CD14-positive monocyte (primary cell): ENCODE measurements at regions of chr11 and their contacts with region 1.

Region 1: DNA sequence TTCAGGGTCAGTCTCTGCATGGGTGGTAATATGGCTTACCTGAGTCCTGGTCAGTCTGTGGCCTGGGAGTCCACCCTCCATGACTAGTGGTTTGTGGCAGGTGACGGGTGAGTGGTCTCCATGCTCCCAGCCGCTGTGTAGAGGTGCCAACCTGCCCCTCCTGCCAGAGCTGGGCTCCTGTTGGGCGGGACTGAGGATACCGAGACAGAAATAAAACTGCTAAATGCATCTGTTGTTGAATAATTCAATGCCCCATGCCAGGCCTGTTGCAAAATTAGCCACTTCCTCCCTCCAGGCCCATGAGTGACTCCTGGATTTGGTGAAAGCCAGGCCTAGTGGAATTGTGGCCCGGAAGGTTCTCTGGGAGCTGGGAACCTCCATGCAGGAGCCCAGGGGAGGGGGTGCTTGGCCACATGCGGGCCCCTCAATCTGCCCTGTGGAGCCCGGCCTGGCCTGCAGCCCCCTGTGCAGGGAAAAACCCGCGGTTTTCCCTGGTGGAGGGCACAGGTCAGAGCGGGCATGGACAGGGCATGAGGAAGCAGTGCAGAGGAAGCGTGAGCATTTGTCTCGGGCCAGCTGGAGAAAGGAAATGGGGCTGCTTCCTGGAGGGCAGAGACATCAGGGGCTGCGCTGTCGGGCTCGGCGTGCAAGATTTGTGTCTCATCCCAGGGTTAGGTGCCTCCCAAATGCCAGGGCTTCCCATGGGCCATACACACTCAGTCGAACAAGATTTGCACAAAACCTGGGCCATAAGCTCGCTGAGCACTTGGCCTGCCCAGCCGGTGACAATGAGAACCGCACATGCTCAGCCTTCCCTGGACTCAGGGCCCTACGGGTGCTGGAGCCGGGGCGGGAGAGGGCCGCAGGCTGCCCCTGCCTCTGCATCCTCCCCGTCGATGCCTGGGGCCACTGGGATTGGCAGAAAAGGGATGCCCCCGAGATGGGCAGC is 66.9 kb downstream of the KCNQ1 start:
- DNase-seq: peak; percentile 45 to 62 (median 55)
- H3K4me3 ChIP-seq: peak overlapping the region in 1 of 3 experiments; percentile 54
- H3K4me3 Mint-ChIP-seq: peak overlapping the region; percentile 49 to 73
- H3K27ac ChIP-seq: peak overlapping the region; percentile 70 to 81
- H3K27ac Mint-ChIP-seq: peak overlapping the region; percentile 75 to 93 (median 91)
- H3K4me1 ChIP-seq: peaks cover 36 to 46% of the 10 kb centered on the region in 2 donors
- H3K4me1 Mint-ChIP-seq: peaks cover 49% of the 10 kb centered on the region
- H3K27me3 ChIP-seq: no peaks in the 10 kb centered on the region
- H3K27me3 Mint-ChIP-seq: peaks cover 0 to 8% (median 1%) of the 10 kb centered on the region in 3 donors
- CTCF ChIP-seq: no peak

Region 2: DNA sequence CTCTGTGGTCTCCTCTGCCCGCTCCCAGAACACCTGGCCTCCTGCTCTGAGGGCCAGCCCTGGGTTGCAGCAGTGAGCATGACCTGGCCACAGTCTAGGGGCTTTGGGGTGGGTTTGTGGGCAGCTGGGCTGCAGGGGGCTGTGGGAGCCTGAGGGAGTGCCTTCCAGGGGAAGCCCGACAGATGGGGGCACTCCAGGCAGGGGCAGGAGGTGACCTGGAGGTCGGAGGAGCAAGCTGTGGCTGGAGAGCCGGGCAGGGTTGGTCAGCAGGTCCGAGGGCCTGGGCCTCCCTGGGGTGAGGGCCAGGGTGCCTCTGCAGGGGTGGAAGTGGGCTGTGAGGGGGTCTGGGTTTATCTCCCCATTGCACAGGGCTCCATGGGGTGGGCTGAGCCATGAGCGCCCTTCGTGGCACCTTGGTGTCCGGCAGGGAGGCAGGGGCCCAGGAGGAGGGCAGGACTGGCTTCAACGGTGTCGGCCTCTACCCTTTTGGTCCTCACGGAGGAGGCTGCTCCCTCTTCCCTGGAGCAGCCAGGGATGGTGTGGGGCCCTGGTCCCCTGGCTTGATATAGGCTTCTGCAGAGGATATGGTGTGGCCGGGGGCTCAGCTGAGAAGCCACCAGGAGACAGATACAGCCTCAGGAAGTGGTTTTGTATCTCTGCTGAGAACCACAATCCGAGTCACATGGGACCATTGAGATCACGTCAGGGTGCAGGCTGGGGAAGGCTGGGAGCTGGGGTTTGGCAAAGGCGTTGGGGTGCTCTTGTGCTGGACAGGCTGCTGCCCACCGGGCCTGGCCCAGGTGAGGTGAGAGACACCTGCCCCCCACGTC is 44.6 kb before region 1 on chr11:
- intact Hi-C with region 1: loop called in 1 of 2 experiments (anchors 5 kb)
- DNase-seq: peak in 2 of 3 donors; percentile 22 to 23
- H3K4me3 ChIP-seq: no peak overlapping the region
- H3K4me3 Mint-ChIP-seq: peak overlapping the region in 1 of 2 donors; percentile 60
- H3K27ac ChIP-seq: no peak overlapping the region
- H3K27ac Mint-ChIP-seq: peak overlapping the region in 2 of 7 donors; percentile 58 to 72
- H3K4me1 ChIP-seq: peaks cover 33% of the 10 kb centered on the region in 2 donors
- H3K4me1 Mint-ChIP-seq: peaks cover 45% of the 10 kb centered on the region
- H3K27me3 ChIP-seq: no peaks in the 10 kb centered on the region
- H3K27me3 Mint-ChIP-seq: peaks cover 5 to 13% (median 12%) of the 10 kb centered on the region in 3 donors
- CTCF ChIP-seq: no peak